Heart left ventricle (tissue), 16 donors: ENCODE measurements at regions of chr12 and their contacts with region 1.

Region 1: DNA sequence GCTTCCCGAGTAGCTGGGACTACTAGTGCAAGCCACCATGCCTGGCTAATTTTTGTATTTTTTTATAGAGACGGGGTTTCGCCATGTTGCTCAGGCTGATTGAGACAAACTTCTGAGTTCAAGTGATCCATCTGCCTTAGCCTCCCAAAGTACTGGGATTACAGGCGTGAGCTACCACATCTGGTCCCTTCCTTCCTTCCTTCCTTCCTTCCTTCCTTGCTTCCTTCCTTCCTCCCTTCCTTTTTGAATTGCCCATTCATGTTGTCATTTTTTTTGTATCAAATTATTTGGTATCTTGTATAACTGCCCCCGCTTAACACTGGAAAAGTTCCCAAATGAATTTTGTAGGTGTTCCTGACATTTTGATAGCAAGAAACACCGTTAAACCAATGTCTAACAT is 11.7 kb downstream of the RAD9B start:
- DNase-seq: no peak
- ATAC-seq: no peak
- H3K4me3 ChIP-seq: no peak overlapping the region
- H3K27ac ChIP-seq: no peak overlapping the region
- H3K4me1 ChIP-seq: peaks cover 0 to 4% (median 0%) of the 10 kb centered on the region in 12 donors
- H3K27me3 ChIP-seq: no peaks in the 10 kb centered on the region
- CTCF ChIP-seq: no peak
- POLR2A ChIP-seq: no peak

Region 2: DNA sequence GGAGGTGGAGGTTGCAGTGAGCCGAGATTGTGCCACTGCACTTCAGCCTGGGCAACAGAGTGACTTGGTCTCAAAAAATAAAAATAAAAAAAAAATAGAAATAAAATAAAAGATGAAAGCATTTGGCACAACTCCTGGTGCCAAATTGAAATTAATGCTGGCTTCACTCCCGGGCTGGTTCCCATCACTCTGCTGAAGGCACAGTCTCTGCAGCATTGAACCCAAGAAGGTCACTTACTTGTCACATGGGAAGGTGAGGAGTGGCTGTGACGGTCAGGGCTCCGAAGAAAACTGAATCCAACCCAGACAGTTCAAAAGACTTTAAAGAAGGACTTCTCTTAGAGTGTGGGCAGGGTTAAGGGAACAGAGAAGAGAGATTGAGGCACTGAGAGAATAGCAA is 322.4 kb after region 1 on chr12:
- intact Hi-C with region 1: loop called in 1 of 10 experiments (anchors 10 kb)
- DNase-seq: no peak
- ATAC-seq: no peak
- H3K4me3 ChIP-seq: no peak overlapping the region
- H3K27ac ChIP-seq: no peak overlapping the region
- H3K4me1 ChIP-seq: no peaks in the 10 kb centered on the region
- H3K27me3 ChIP-seq: no peaks in the 10 kb centered on the region
- CTCF ChIP-seq: no peak
- POLR2A ChIP-seq: no peak